T-cell (primary cell): ENCODE measurements at regions of chr21 and their contacts with region 1.

Region 1: GRCh38 chr21:44057055-44057454 is 44.9 kb downstream of the TRAPPC10 start:
- DNase-seq: no peak
- ATAC-seq: no peak
- H3K4me3 ChIP-seq: no peak overlapping the region
- H3K4me3 Mint-ChIP-seq: no peak overlapping the region
- H3K27ac ChIP-seq: no peak overlapping the region
- H3K27ac Mint-ChIP-seq: peak overlapping the region in 1 of 2 donors; percentile 74
- H3K4me1 ChIP-seq: peaks cover 0 to 13% of the 10 kb centered on the region in 2 experiments
- H3K4me1 Mint-ChIP-seq: peaks cover 9 to 31% (median 21%) of the 10 kb centered on the region in 3 donors
- H3K27me3 ChIP-seq: no peaks in the 10 kb centered on the region
- H3K27me3 Mint-ChIP-seq: no peaks in the 10 kb centered on the region

Region 2: DNA sequence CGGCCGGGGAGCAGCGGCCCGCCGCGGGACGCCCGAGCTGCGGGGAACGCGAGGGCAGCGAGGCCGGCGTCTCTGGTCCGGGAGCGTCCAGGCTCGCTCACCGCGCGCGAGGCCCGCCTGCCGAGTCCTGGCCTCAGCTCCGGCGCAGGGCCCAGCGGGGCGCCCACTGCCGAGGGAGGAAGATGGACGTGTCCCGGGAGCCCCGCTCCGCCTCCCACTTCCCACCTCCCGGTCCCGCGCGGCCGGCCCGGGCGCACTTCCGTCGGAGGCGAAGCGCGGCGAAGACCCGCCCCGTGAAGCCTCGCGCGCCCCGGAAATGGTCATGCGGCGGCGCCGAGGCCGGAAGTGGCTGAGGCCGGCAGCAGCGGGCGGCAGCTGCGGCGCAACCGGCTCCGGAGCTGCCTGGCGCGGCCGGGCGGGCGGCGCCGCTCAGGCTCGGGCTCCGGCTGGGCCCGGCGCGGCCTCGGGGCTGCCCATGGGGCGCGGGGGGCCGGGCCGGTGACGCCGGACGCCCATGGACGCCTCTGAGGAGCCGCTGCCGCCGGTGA is 45.0 kb before region 1 on chr21 and contains the start of gene TRAPPC10:
- CTCF ChIA-PET with region 1: no interaction called
- POLR2A ChIA-PET with region 1: interaction called in 1 of 2 experiments, 12 read pairs
- DNase-seq: peak; percentile 29 to 88 (median 64)
- ATAC-seq: peak; percentile 72 to 79 (median 77)
- H3K4me3 ChIP-seq: peak within 1 kb of the TSS; percentile 74 to 91
- H3K4me3 Mint-ChIP-seq: peak within 1 kb of the TSS; percentile 92 to 96 (median 92)
- H3K27ac ChIP-seq: peak within 1 kb of the TSS; percentile 81
- H3K27ac Mint-ChIP-seq: peak within 1 kb of the TSS; percentile 94 to 96
- H3K4me1 ChIP-seq: peaks cover 10 to 34% of the 10 kb centered on the region in 2 experiments
- H3K4me1 Mint-ChIP-seq: peaks cover 46 to 54% (median 49%) of the 10 kb centered on the region in 3 donors
- H3K27me3 ChIP-seq: no peaks in the 10 kb centered on the region
- H3K27me3 Mint-ChIP-seq: no peaks in the 10 kb centered on the region
- total RNA-seq, gene TRAPPC10: 82.5 to 144 (median 92.2) TPM